ENCODE measurements at regions of chr2 and their contacts with region 1.

Region 1: DNA sequence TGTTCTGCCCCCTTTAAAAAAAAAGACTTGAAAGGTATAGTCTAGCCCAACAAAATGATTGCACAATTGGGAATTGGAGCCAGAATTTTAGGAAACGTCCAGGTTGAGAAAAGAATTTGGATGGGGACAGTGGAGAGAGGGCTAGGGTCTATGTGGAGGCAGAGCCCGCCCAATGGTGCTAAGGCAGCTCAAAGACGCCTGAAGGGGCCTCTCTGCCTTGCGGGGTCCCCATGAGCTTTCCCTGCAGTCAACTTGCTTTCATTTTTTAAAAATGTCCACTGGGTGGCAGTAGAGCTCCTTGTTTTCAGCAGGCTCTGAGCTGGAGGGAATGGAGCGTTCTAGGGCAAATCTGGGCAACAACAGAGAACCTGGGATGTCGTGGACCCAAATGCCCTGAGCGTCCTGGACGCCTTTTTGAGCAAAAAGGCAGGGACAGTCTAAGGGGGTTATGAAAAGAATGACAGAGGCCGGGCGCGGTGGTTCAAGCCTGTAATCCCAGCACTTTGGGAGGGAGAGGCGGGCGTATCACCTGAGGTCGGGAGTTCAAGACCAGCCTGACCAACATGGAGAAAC is 40.2 kb upstream of the ITM2C start:
- DNase-seq: peak; percentile 88 to 93 (median 89)
- H3K4me3 ChIP-seq: peak overlapping the region in 4 of 7 experiments; percentile 8 to 44 (median 30)
- H3K27ac ChIP-seq: no peak overlapping the region
- H3K4me1 ChIP-seq: peaks cover 0 to 20% (median 12%) of the 10 kb centered on the region in 4 experiments
- H3K27me3 ChIP-seq: peaks cover 0 to 13% (median 4%) of the 10 kb centered on the region in 5 experiments

Region 2: DNA sequence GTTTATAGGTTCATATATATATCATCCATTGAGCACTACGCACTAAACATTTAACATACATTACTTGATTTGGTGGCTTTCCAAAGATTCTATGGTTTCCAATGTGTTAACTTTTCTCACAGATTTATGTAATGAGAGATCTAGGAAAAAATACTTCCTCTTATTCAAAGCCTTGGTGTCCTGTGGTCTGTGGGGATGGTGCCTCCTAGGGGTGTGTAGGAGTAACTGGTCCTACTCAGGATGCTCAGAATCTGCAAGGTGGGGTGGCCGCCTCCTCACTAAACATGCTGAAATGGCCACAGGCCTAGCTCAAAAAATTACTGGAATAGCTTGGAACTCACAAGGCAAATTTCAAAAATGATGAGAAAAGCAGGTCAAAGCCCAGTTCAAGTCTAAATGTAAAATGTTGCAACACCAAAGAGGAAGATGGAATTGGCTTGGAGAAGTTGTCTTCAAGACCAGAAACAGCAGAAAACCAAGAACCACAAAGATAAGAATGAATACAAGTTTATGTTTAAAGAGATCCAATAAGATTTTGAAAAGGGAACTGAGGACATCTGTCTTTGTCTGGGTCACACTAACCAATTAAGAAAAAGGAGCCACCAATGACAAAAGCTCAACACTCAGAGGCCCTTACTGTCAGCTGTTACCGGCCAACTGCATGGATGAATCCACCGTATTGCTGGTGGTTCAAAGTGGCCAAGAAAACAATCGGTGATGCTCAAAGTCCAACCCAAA is 89.1 kb after region 1 on chr2:
- CTCF ChIA-PET with region 1: interaction called, 24 read pairs
- POLR2A ChIA-PET with region 1: interaction called, 3 read pairs
- DNase-seq: peak; percentile 82 to 93 (median 91)
- H3K4me3 ChIP-seq: no peak overlapping the region
- H3K27ac ChIP-seq: no peak overlapping the region
- H3K4me1 ChIP-seq: peaks cover 0 to 18% (median 8%) of the 10 kb centered on the region in 4 experiments
- H3K27me3 ChIP-seq: no peaks in the 10 kb centered on the region

Region 3: DNA sequence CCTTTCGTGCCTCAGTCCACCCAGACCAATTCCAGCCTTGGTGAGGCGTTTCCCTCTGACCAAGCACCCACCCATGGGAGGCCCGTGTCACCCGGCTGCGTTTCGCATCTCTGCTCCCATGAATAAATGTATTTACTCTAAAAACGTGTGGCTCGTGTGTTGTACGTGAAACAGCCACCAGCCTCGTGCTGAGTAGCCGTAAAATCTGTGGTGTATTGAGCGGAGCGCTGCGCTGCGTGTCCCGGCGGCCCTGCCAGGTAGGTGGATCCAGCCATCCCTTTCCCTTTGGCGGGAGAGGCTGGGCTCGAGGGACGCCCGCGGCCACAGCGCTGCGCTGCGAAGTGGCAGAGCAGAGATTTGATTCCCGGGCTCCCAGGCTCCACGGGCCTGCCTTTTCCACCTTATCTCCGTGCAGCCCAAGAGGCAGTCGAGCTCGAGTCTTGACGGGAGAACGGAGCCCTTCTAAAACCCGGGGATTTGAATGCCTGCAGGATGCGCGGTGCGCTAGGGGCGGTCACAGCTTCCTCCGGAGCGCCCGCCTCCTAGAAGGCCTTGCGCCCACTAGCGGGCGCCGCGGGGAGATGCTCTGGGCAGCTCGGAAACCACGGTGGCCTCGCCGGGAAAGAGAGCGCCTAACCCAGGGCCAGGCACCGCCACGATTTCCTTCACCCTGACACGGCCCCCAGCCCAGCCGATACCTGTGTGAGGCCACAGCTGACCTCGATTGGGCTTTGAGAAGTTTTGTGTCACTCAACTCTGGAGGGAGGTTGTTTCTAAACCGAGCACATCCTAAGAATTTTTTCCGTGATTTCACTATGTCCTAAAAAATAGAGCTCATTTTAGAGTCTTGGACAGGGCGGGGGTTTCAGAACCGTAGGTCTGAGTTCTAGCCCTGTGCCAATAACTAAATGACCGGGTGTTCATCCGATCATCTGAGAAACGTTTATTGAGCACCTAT is 228.3 kb after region 1 on chr2:
- CTCF ChIA-PET with region 1: interaction called, 10 read pairs
- POLR2A ChIA-PET with region 1: no interaction called
- DNase-seq: peak; percentile 80 to 89 (median 89)
- H3K4me3 ChIP-seq: peak overlapping the region; percentile 61 to 88 (median 65)
- H3K27ac ChIP-seq: no peak overlapping the region
- H3K4me1 ChIP-seq: peaks cover 5 to 23% (median 16%) of the 10 kb centered on the region in 4 experiments
- H3K27me3 ChIP-seq: peaks cover 0 to 16% (median 11%) of the 10 kb centered on the region in 5 experiments

Measured in common myeloid progenitor, CD34-positive (primary cell).